ENCODE measurements at regions of chr19 and their contacts with region 1.

Region 1: DNA sequence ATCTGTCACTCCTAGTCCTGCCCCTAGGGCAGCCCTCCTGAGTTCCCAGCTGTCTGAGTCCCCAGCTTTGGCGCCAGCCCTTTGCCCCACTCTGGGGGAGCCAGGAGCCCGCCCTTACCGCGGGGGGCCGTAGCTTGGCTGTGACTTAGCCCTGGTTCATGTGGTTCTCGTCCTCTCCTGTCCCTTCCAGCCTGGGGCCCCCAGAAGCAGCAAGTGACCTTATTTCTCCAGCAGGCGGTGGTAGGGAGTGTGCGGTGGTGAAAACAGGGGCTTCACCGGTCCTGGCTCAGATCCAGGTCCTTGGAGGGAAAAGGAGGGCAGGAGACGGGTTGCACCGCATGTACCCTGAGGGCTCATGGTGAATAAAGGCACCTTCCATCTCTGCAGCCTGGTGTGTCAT is 7.9 kb downstream of the GIPC3 start:
- DNase-seq: peak in 1 of 2 experiments; percentile 63
- H3K4me3 ChIP-seq: no peak overlapping the region
- H3K27ac ChIP-seq: no peak overlapping the region
- H3K4me1 ChIP-seq: no peaks in the 10 kb centered on the region
- H3K27me3 ChIP-seq: peaks cover 0 to 2% (median 0%) of the 10 kb centered on the region in 4 experiments; a peak in 2 of 7 replicates
- CTCF ChIP-seq: peak; percentile 73 to 77 (median 75)
- EP300 ChIP-seq: no peak
- POLR2A ChIP-seq: no peak
- RAD21 ChIP-seq: peak; percentile 50 to 66

Region 2: DNA sequence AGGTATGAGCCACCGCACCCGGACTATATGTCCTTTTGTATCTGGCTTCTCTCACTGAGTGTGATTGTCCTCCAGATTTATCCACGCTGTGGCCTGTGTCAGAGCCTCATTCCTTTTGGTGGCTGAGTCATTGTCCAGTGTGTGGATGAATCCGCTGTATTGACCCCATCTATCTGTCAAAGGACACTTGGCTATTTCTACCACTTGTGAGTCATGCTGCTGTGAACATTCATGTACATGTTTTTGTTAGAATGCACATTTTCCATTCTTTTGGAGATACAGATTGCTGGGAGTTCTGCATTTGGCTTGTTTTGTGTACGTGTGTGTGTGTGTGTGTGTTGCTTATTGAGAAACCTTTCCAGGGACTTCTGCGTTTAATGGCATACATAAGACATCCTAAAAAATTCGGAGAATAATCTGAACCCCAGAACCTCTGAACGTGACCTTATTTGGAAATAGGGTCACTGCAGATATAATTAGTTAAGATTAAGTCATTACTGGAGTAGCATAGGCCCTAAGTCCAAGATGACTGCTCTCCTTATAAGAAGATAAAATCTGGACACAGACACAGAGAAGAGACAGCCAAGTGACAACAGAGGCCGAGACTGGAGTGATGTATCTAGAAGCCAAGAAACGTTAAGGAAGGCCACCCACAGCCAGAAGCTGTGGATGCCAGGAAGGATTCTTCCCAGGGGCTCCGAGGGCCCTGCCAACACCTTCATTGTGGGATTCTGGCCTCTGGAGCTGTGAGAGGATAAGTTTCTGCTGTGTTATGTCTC is 12.8 kb before region 1 on chr19:
- CTCF ChIA-PET with region 1: interaction called, 18 read pairs
- POLR2A ChIA-PET with region 1: interaction called, 6 read pairs
- DNase-seq: no peak
- H3K4me3 ChIP-seq: no peak overlapping the region
- H3K27ac ChIP-seq: no peak overlapping the region
- H3K4me1 ChIP-seq: peaks cover 0 to 13% (median 8%) of the 10 kb centered on the region in 4 experiments; a peak in 5 of 7 replicates
- H3K27me3 ChIP-seq: peaks cover 4 to 9% (median 4%) of the 10 kb centered on the region in 4 experiments; a peak in 6 of 7 replicates
- CTCF ChIP-seq: no peak
- EP300 ChIP-seq: no peak
- POLR2A ChIP-seq: no peak
- RAD21 ChIP-seq: no peak

Region 3: DNA sequence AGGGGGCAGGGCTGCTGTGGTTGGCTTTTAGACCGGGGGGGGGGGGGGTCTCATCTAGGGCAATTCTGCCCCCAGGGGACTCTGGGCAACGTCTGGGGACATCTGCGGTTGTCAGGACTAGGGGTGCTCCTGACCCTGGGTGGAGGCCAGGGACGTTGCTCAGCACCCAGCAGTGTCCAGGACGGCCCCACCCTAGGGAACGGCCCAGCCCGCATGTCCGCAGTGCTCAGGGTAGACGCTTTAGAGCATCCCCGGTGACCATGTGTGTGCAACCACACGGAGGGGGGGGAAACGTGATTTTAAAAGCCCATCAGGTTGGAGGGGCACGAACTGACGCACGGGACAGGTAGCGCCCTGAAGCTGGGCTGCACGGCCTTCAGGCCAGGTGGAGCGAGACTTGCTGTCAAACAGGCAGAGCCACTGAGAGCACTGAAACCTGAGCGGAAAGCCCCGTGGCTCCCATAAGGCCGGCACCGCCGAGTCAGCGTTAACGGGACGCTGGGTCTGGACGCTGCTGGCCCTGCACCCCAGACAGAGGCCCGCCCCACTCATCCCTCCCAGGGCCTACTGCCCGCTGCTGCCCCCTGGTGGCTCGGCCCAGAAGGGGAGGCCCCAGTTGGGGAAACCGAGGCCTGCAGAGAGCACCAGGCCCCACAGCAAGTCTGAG is 25.1 kb after region 1 on chr19:
- CTCF ChIA-PET with region 1: interaction called, 29 read pairs
- POLR2A ChIA-PET with region 1: no interaction called
- DNase-seq: peak in 1 of 2 experiments; percentile 96
- H3K4me3 ChIP-seq: no peak overlapping the region
- H3K27ac ChIP-seq: no peak overlapping the region
- H3K4me1 ChIP-seq: peaks cover 0 to 3% (median under 1%) of the 10 kb centered on the region in 4 experiments; a peak in 3 of 7 replicates
- H3K27me3 ChIP-seq: no peaks in the 10 kb centered on the region
- CTCF ChIP-seq: peak; percentile 86 to 92 (median 86)
- EP300 ChIP-seq: no peak
- POLR2A ChIP-seq: no peak
- RAD21 ChIP-seq: peak; percentile 68 to 80